Natural killer cell (primary cell): ENCODE measurements at regions of chr6 and their contacts with region 1.

Region 1: GRCh38 chr6:85593438-85594196 is at the start of gene SNX14:
- DNase-seq: peak; percentile 75 to 86
- ATAC-seq: peak; percentile 73 to 92 (median 79)
- H3K4me3 ChIP-seq: peak within 1 kb of the TSS; percentile 94
- H3K4me3 Mint-ChIP-seq: peak within 1 kb of the TSS; percentile 96
- H3K27ac ChIP-seq: peak within 1 kb of the TSS; percentile 91
- H3K27ac Mint-ChIP-seq: peak within 1 kb of the TSS; percentile 92 to 98
- H3K4me1 ChIP-seq: peaks cover 11% of the 10 kb centered on the region
- H3K4me1 Mint-ChIP-seq: peaks cover 52 to 56% of the 10 kb centered on the region in 2 donors
- H3K27me3 ChIP-seq: no peaks in the 10 kb centered on the region
- H3K27me3 Mint-ChIP-seq: no peaks in the 10 kb centered on the region
- CTCF ChIP-seq: no peak
- total RNA-seq, gene SNX14: 73.0 to 109 (median 80.3) TPM

Region 2: GRCh38 chr6:85642774-85643536 is 49.3 kb after region 1 on chr6 and contains the start of gene SYNCRIP:
- intact Hi-C with region 1: loop called (anchors 1 kb)
- DNase-seq: peak; percentile 96 to 99
- ATAC-seq: peak; percentile 81 to 95 (median 85)
- H3K4me3 ChIP-seq: peak within 1 kb of the TSS; percentile 95
- H3K4me3 Mint-ChIP-seq: peak within 1 kb of the TSS; percentile 87
- H3K27ac ChIP-seq: peak within 1 kb of the TSS; percentile 100
- H3K27ac Mint-ChIP-seq: peak within 1 kb of the TSS; percentile 94 to 98
- H3K4me1 ChIP-seq: peaks cover 10% of the 10 kb centered on the region
- H3K4me1 Mint-ChIP-seq: peaks cover 33 to 58% of the 10 kb centered on the region in 2 donors
- H3K27me3 ChIP-seq: no peaks in the 10 kb centered on the region
- H3K27me3 Mint-ChIP-seq: no peaks in the 10 kb centered on the region
- CTCF ChIP-seq: no peak
- total RNA-seq, gene SYNCRIP: 65.8 to 99.1 (median 80.9) TPM